Astrocyte of the cerebellum (primary cell): ENCODE measurements at regions of chr3 and their contacts with region 1.

Region 1: GRCh38 chr3:155382396-155383042 is 89.0 kb upstream of the STRIT1 start:
- DNase-seq: peak; percentile 52
- H3K4me3 ChIP-seq: no peak overlapping the region
- CTCF ChIP-seq: peak; percentile 86

Region 2: GRCh38 chr3:155282385-155283091 is 100.0 kb before region 1 on chr3:
- in situ Hi-C with region 1: no loop called
- DNase-seq: peak; percentile 80
- H3K4me3 ChIP-seq: no peak overlapping the region
- CTCF ChIP-seq: no peak

Region 3: GRCh38 chr3:155701882-155702465 is 319.5 kb after region 1 on chr3:
- in situ Hi-C with region 1: loop called (anchors 10 kb)
- DNase-seq: peak; percentile 52
- H3K4me3 ChIP-seq: no peak overlapping the region
- CTCF ChIP-seq: peak; percentile 36

Region 4: GRCh38 chr3:155948476-155948875 is 566.0 kb after region 1 on chr3:
- in situ Hi-C with region 1: no loop called
- DNase-seq: no peak
- H3K4me3 ChIP-seq: no peak overlapping the region
- CTCF ChIP-seq: no peak